Caco-2 (cell line): ENCODE measurements at regions of chr21 and their contacts with region 1.

Region 1: DNA sequence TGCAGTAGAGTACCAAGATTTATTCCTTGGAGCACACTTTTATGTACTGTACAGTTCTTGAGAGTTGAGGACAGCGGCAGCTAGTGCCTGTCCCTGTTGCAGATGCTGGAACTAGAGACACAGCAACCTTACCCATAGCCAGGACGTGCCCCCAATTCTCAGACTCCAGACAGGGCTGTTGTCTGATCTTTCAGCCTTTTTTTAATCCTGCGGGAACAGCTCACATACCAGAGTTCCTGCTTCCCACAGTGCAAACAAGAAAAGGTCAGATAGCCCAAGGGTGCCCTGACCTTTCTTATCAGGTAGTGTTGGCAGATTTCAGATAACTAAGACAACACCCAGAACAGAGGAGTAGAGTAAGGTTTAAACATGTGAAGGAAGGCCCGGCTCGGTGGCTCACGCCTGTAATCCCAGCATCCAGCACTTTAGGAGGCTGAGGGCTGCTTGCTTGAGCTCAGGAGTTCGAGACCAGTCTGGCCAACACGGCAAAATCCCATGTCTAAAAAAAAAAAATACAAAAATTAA is 78.5 kb downstream of the DOP1B start:
- DNase-seq: peak; percentile 87 to 93
- H3K4me3 ChIP-seq: no peak overlapping the region
- H3K4me3 Mint-ChIP-seq: peak overlapping the region; percentile 35
- H3K27ac Mint-ChIP-seq: peak overlapping the region; percentile 79
- H3K4me1 ChIP-seq: peaks cover 23% of the 10 kb centered on the region
- H3K4me1 Mint-ChIP-seq: peaks cover 23% of the 10 kb centered on the region
- H3K27me3 ChIP-seq: no peaks in the 10 kb centered on the region
- H3K27me3 Mint-ChIP-seq: no peaks in the 10 kb centered on the region
- CTCF ChIP-seq: no peak

Region 2: DNA sequence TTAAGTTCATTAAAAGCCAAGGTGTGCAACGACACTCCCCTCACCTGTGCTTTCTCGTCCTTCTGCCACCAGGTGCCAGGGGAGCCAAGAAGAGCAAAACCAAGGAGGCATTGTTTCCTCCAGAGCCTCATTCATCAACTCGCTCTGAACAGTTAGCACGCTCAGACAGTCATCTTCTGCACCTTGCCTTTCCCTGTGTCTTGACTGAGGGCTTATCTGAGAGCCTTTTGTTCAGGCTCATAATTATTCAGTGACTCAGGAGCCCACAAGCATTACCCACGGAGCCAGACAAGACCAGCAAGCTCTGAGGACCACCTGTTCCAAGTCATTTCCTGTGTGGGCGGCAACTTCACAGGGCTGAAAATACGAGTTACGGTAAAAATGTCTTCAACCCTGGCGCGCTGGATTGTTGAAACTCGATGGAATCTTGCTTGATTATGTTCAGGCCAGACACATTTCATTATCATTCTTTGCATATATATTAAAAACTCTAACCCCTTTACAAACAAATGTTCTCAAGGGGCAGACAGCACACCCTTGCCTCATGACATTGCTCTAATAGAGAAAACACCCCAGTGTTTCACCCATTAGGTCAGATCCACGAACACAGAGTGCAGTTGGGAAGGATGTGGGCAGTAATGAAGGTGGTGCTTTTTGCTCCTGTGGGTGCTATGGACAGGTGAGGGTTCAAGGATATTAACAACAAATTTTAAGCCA is 1096.3 kb before region 1 on chr21:
- CTCF ChIA-PET with region 1: no interaction called
- POLR2A ChIA-PET with region 1: no interaction called
- intact Hi-C with region 1: no loop called
- DNase-seq: peak; percentile 12 to 59
- H3K4me3 ChIP-seq: no peak overlapping the region
- H3K4me3 Mint-ChIP-seq: no peak overlapping the region
- H3K27ac Mint-ChIP-seq: peak overlapping the region; percentile 57
- H3K4me1 ChIP-seq: peaks cover 36% of the 10 kb centered on the region
- H3K4me1 Mint-ChIP-seq: peaks cover 29% of the 10 kb centered on the region
- H3K27me3 ChIP-seq: no peaks in the 10 kb centered on the region
- H3K27me3 Mint-ChIP-seq: no peaks in the 10 kb centered on the region
- CTCF ChIP-seq: no peak

Region 3: GRCh38 chr21:36203617-36203917 is 31.6 kb before region 1 on chr21:
- CTCF ChIA-PET with region 1: no interaction called
- POLR2A ChIA-PET with region 1: no interaction called
- intact Hi-C with region 1: no loop called
- DNase-seq: peak in 1 of 2 experiments; percentile 54
- H3K4me3 ChIP-seq: no peak overlapping the region
- H3K4me3 Mint-ChIP-seq: no peak overlapping the region
- H3K27ac Mint-ChIP-seq: peak overlapping the region; percentile 84
- H3K4me1 ChIP-seq: peaks cover 37% of the 10 kb centered on the region
- H3K4me1 Mint-ChIP-seq: peaks cover 35% of the 10 kb centered on the region
- H3K27me3 ChIP-seq: no peaks in the 10 kb centered on the region
- H3K27me3 Mint-ChIP-seq: no peaks in the 10 kb centered on the region
- CTCF ChIP-seq: no peak

Region 4: DNA sequence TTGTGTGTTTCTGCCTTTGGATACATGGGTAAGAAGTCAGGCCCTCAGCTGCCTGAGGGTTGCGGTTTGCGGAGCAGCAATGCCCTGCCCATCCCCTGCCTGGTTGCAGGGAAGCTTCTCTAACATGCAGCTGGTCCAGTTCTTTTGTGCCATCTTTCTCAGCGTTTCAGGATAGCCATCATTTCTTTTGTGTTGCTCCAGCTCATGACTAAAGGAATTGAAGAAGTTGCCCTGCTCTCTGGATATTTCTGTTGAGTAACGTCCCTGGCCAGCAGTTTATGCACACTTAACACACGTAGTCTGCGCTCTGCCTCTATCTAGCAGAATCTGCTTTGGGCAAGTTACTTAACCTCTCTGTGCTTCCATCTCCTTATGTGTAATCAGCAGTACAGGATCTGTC is 16.4 kb before region 1 on chr21:
- CTCF ChIA-PET with region 1: no interaction called
- POLR2A ChIA-PET with region 1: no interaction called
- intact Hi-C with region 1: no loop called
- DNase-seq: no peak
- H3K4me3 ChIP-seq: no peak overlapping the region
- H3K4me3 Mint-ChIP-seq: no peak overlapping the region
- H3K27ac Mint-ChIP-seq: no peak overlapping the region
- H3K4me1 ChIP-seq: no peaks in the 10 kb centered on the region
- H3K4me1 Mint-ChIP-seq: no peaks in the 10 kb centered on the region
- H3K27me3 ChIP-seq: no peaks in the 10 kb centered on the region
- H3K27me3 Mint-ChIP-seq: no peaks in the 10 kb centered on the region
- CTCF ChIP-seq: no peak

Region 5: DNA sequence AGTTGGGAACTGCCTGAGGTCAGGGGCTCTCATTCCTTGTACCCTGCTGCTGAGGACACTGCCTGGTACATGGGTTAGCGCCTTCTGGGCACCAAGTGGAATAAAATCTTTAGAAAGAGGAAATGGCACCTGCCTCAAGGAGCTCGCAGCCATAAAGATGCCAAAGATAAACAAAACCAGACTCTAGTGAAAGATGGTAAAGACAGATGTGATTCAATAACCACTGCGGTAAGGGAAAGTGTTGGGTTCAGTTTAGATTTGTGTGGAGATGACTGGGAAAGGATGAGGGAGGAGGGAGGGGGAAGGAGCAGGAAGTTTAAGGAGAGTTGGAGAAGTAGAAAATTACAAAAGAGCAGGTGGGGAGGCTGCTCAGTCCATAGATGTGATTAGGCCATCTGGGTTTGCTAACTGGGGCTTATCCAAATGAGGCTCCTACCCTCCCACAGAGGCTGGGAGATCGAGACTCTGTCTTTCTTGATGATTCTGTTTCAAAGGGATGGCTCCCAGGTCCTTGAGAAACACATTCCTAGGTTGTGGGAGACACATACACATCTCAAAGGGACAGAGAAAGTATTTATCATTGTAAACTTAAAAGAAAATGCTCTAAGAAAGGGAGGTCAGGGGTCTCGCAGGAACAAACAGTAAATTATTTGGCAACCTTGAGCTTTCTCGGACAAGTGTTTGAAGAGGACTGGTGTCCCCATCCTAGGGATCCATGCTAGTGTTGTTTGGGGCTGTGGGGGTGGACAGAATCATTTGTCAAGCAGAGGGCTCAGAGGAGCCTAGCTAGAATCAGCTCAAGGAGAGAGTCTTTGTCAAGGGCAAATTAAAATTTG is 19.2 kb after region 1 on chr21:
- CTCF ChIA-PET with region 1: no interaction called
- POLR2A ChIA-PET with region 1: no interaction called
- intact Hi-C with region 1: loop called (anchors 1 kb)
- DNase-seq: peak in 1 of 2 experiments; percentile 37
- H3K4me3 ChIP-seq: no peak overlapping the region
- H3K4me3 Mint-ChIP-seq: no peak overlapping the region
- H3K27ac Mint-ChIP-seq: peak overlapping the region; percentile 54
- H3K4me1 ChIP-seq: no peaks in the 10 kb centered on the region
- H3K4me1 Mint-ChIP-seq: peaks cover 25% of the 10 kb centered on the region
- H3K27me3 ChIP-seq: no peaks in the 10 kb centered on the region
- H3K27me3 Mint-ChIP-seq: no peaks in the 10 kb centered on the region
- CTCF ChIP-seq: no peak

Region 6: DNA sequence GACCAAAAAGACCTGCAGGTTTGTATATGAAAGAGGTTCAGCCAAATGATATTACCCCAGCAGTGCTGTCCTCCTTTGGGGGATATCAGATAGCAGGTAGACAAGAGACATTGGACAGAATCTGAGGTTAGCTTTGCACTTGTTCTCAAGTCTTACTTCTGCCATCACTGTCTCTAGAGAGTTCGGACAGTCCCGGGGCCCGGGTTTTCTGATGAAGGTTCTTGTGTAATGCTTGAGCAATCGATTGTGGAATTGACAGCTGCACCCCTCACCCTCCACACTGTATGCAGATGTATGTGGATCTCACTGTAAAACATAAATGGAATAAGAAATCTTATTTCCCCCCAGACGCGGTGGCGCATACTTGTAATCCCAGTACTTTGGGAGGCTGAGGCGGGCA is 28.7 kb after region 1 on chr21:
- CTCF ChIA-PET with region 1: no interaction called
- POLR2A ChIA-PET with region 1: no interaction called
- intact Hi-C with region 1: loop called (anchors 1 kb)
- DNase-seq: no peak
- H3K4me3 ChIP-seq: no peak overlapping the region
- H3K4me3 Mint-ChIP-seq: no peak overlapping the region
- H3K27ac Mint-ChIP-seq: no peak overlapping the region
- H3K4me1 ChIP-seq: peaks cover 28% of the 10 kb centered on the region
- H3K4me1 Mint-ChIP-seq: peaks cover 7% of the 10 kb centered on the region
- H3K27me3 ChIP-seq: no peaks in the 10 kb centered on the region
- H3K27me3 Mint-ChIP-seq: no peaks in the 10 kb centered on the region
- CTCF ChIP-seq: no peak